Activated B cell treated with CpG ODN at 0.5 μM for 24 hours (primary cell): ENCODE measurements at regions of chr20 and their contacts with region 1.

Region 1: GRCh38 chr20:36132802-36133211 is 21.7 kb upstream of the EPB41L1 start:
- DNase-seq: no peak
- ATAC-seq: peak; percentile 95
- H3K4me3 Mint-ChIP-seq: no peak overlapping the region
- H3K27ac Mint-ChIP-seq: no peak overlapping the region
- H3K4me1 Mint-ChIP-seq: peaks cover 14% of the 10 kb centered on the region
- H3K27me3 Mint-ChIP-seq: no peaks in the 10 kb centered on the region
- CTCF ChIP-seq: no peak

Region 2: DNA sequence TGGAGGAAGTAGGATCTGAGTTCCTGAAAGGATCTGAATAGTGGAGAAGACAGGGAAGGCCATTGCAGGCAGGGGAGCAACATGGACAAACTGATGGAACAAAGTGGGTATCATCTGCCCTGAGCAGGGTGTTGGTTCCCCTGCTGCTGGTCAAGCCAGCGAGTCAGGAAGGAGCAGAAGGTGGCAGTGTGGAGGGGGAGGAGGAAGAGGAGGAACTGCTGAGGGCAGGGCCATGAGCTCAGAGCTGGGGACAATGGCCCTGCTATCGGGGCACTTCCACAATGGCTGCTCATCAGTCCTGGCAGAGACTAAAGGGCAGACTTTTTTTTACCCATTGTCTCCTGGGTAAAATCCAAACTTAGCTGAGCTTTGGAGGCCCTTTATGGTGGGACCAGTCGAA is 150.8 kb before region 1 on chr20:
- CTCF ChIA-PET with region 1: interaction called, 15 read pairs
- POLR2A ChIA-PET with region 1: no interaction called
- intact Hi-C with region 1: no loop called
- DNase-seq: no peak
- ATAC-seq: no peak
- H3K4me3 Mint-ChIP-seq: no peak overlapping the region
- H3K27ac Mint-ChIP-seq: no peak overlapping the region
- H3K4me1 Mint-ChIP-seq: no peaks in the 10 kb centered on the region
- H3K27me3 Mint-ChIP-seq: peaks cover 6% of the 10 kb centered on the region
- CTCF ChIP-seq: no peak

Region 3: DNA sequence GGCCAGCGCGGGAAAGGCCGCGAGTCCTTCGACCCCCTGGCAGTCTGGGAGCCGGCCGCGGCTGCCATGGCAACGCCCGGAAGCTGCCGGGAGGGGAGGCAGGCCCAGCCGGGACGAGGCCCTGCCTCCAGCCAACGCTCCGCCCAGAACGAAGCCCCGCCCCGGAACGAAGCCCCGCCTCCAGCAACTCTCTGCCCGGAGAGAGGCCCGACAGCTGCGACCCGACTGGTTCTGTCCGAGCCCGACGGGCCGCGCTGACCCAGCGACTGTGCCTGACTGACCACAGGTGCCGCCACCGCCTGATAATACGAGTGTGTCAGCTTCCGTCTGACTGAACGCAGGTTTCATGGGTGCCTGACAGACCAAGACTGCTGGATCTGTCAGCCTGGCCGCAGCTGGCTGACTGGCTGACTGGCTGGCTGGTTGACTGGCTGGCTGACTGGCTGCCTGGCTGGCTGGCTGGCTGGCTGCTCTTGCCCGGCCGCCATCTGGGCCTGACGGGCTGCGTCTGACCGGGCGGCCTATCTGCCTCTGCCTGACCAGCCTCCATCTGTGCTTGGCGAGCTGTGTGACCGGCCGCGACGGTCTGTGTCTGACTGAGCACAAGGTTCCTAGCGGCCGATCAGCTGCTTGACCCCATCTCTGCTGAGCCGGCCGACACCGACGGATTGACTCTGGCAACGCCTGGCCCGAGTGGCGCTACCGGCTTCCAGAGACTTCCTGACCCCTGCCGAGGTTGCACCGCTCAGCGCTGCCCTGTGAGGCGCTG is 68.0 kb before region 1 on chr20:
- CTCF ChIA-PET with region 1: interaction called, 8 read pairs
- POLR2A ChIA-PET with region 1: no interaction called
- intact Hi-C with region 1: loop called (anchors 5 kb)
- DNase-seq: peak; percentile 99
- ATAC-seq: peak; percentile 96
- H3K4me3 Mint-ChIP-seq: peak overlapping the region; percentile 90
- H3K27ac Mint-ChIP-seq: peak overlapping the region; percentile 78
- H3K4me1 Mint-ChIP-seq: peaks cover 5% of the 10 kb centered on the region
- H3K27me3 Mint-ChIP-seq: peaks cover 3% of the 10 kb centered on the region
- CTCF ChIP-seq: no peak

Region 4: GRCh38 chr20:36098364-36098763 is 34.4 kb before region 1 on chr20:
- CTCF ChIA-PET with region 1: interaction called, 3 read pairs
- POLR2A ChIA-PET with region 1: no interaction called
- intact Hi-C with region 1: loop called (anchors 5 kb)
- DNase-seq: peak; percentile 33
- ATAC-seq: peak; percentile 83
- H3K4me3 Mint-ChIP-seq: peak overlapping the region; percentile 29
- H3K27ac Mint-ChIP-seq: peak overlapping the region; percentile 47
- H3K4me1 Mint-ChIP-seq: peaks cover 27% of the 10 kb centered on the region
- H3K27me3 Mint-ChIP-seq: peaks cover 6% of the 10 kb centered on the region
- CTCF ChIP-seq: no peak

Region 5: GRCh38 chr20:36149469-36149868 is 16.7 kb after region 1 on chr20:
- CTCF ChIA-PET with region 1: no interaction called
- POLR2A ChIA-PET with region 1: no interaction called
- intact Hi-C with region 1: no loop called
- DNase-seq: no peak
- ATAC-seq: no peak
- H3K4me3 Mint-ChIP-seq: no peak overlapping the region
- H3K27ac Mint-ChIP-seq: no peak overlapping the region
- H3K4me1 Mint-ChIP-seq: no peaks in the 10 kb centered on the region
- H3K27me3 Mint-ChIP-seq: peaks cover 19% of the 10 kb centered on the region
- CTCF ChIP-seq: no peak